ENCODE measurements at regions of chr6 and their contacts with region 1.

Region 1: DNA sequence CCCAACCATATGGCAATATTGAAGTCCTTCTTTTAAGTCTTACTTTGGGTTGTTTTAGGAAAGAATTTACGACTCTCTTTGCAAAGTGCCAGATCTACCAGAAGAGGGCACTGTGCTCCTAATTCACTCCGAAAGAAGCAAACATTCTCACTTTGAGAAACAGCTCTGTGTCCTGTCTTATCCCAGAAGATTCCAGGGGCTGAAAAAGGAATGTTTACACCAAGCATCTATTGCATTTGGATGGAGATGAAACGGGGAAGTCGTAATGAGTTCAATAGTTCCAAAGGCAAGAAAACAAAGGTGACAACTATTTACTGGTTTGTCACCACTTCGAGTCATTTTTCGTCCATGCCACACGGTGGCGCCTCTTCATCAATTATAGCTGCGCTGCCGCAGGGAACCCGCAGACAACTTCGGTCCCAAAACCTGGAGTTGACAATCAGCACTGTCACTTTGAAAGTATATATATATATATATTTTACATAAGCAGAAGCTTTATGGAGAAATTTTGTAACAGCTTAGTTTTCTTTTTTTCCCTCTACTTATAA is 121.6 kb downstream of the MOXD1 start:
- DNase-seq: peak; percentile 55 to 83 (median 65)
- ATAC-seq: peak; percentile 94
- H3K4me3 ChIP-seq: peak overlapping the region; percentile 34
- H3K27ac ChIP-seq: no peak overlapping the region; the same call in 2 of the 3 replicates
- H3K4me1 ChIP-seq: no peaks in the 10 kb centered on the region
- H3K27me3 ChIP-seq: no peaks in the 10 kb centered on the region
- CTCF ChIP-seq: peak; percentile 69 to 96 (median 91)
- EP300 ChIP-seq: no peak
- POLR2A ChIP-seq: no peak
- RAD21 ChIP-seq: peak; percentile 80 to 82

Region 2: GRCh38 chr6:132768051-132768517 is 488.4 kb after region 1 on chr6:
- CTCF ChIA-PET with region 1: interaction called, 8 read pairs
- POLR2A ChIA-PET with region 1: no interaction called
- in situ Hi-C with region 1: loop called (anchors 25 kb)
- intact Hi-C with region 1: loop called (anchors 5 kb)
- DNase-seq: peak; percentile 42 to 67 (median 54)
- ATAC-seq: peak; percentile 99
- H3K4me3 ChIP-seq: peak overlapping the region; percentile 34
- H3K27ac ChIP-seq: no peak overlapping the region; the same call in 2 of the 3 replicates
- H3K4me1 ChIP-seq: no peaks in the 10 kb centered on the region
- H3K27me3 ChIP-seq: no peaks in the 10 kb centered on the region
- CTCF ChIP-seq: peak; percentile 69 to 92 (median 71)
- EP300 ChIP-seq: no peak
- POLR2A ChIP-seq: no peak
- RAD21 ChIP-seq: peak; percentile 80 to 83

Measured in K562 (cell line).